ENCODE measurements at regions of chr12 and their contacts with region 1.

Region 1: GRCh38 chr12:121668750-121669520 is 519 bp downstream of the MORN3 start:
- DNase-seq: peak; percentile 24 to 70 (median 32)
- H3K4me3 ChIP-seq: no peak overlapping the region
- H3K4me3 Mint-ChIP-seq: peak overlapping the region in 4 of 7 donors; percentile 28 to 77 (median 52)
- H3K27ac ChIP-seq: no peak overlapping the region
- H3K27ac Mint-ChIP-seq: peak overlapping the region; percentile 68 to 100 (median 84)
- H3K4me1 ChIP-seq: peaks cover 69% of the 10 kb centered on the region
- H3K4me1 Mint-ChIP-seq: peaks cover 51 to 72% (median 59%) of the 10 kb centered on the region in 3 donors
- H3K27me3 ChIP-seq: no peaks in the 10 kb centered on the region
- H3K27me3 Mint-ChIP-seq: peaks cover 0 to 13% of the 10 kb centered on the region in 2 donors

Region 2: GRCh38 chr12:121494093-121494787 is 174.7 kb before region 1 on chr12:
- CTCF ChIA-PET with region 1: interaction called, 13 read pairs
- POLR2A ChIA-PET with region 1: no interaction called
- DNase-seq: peak; percentile 26 to 74 (median 47)
- H3K4me3 ChIP-seq: no peak overlapping the region
- H3K4me3 Mint-ChIP-seq: no peak overlapping the region
- H3K27ac ChIP-seq: no peak overlapping the region
- H3K27ac Mint-ChIP-seq: peak overlapping the region in 4 of 8 donors; percentile 29 to 68 (median 56)
- H3K4me1 ChIP-seq: peaks cover 10% of the 10 kb centered on the region
- H3K4me1 Mint-ChIP-seq: peaks cover 26 to 55% (median 41%) of the 10 kb centered on the region in 3 donors
- H3K27me3 ChIP-seq: no peaks in the 10 kb centered on the region
- H3K27me3 Mint-ChIP-seq: no peaks in the 10 kb centered on the region

Region 3: GRCh38 chr12:121550974-121551634 is 117.8 kb before region 1 on chr12:
- CTCF ChIA-PET with region 1: interaction called, 81 read pairs
- POLR2A ChIA-PET with region 1: interaction called, 11 read pairs
- DNase-seq: no peak
- H3K4me3 ChIP-seq: no peak overlapping the region
- H3K4me3 Mint-ChIP-seq: no peak overlapping the region
- H3K27ac ChIP-seq: no peak overlapping the region
- H3K27ac Mint-ChIP-seq: peak overlapping the region; percentile 10 to 98 (median 96)
- H3K4me1 ChIP-seq: peaks cover 13% of the 10 kb centered on the region
- H3K4me1 Mint-ChIP-seq: peaks cover 9 to 12% (median 12%) of the 10 kb centered on the region in 3 donors
- H3K27me3 ChIP-seq: no peaks in the 10 kb centered on the region
- H3K27me3 Mint-ChIP-seq: no peaks in the 10 kb centered on the region

Region 4: GRCh38 chr12:121614872-121615467 is 54.0 kb before region 1 on chr12:
- CTCF ChIA-PET with region 1: interaction called, 4 read pairs
- POLR2A ChIA-PET with region 1: interaction called, 10 read pairs
- DNase-seq: peak in 2 of 5 donors; percentile 8 to 31
- H3K4me3 ChIP-seq: no peak overlapping the region
- H3K4me3 Mint-ChIP-seq: peak overlapping the region in 4 of 7 donors; percentile 28 to 66 (median 36)
- H3K27ac ChIP-seq: no peak overlapping the region
- H3K27ac Mint-ChIP-seq: peak overlapping the region in 7 of 8 donors; percentile 22 to 91 (median 80)
- H3K4me1 ChIP-seq: no peaks in the 10 kb centered on the region
- H3K4me1 Mint-ChIP-seq: peaks cover 8 to 10% (median 9%) of the 10 kb centered on the region in 3 donors
- H3K27me3 ChIP-seq: no peaks in the 10 kb centered on the region
- H3K27me3 Mint-ChIP-seq: no peaks in the 10 kb centered on the region

Region 5: DNA sequence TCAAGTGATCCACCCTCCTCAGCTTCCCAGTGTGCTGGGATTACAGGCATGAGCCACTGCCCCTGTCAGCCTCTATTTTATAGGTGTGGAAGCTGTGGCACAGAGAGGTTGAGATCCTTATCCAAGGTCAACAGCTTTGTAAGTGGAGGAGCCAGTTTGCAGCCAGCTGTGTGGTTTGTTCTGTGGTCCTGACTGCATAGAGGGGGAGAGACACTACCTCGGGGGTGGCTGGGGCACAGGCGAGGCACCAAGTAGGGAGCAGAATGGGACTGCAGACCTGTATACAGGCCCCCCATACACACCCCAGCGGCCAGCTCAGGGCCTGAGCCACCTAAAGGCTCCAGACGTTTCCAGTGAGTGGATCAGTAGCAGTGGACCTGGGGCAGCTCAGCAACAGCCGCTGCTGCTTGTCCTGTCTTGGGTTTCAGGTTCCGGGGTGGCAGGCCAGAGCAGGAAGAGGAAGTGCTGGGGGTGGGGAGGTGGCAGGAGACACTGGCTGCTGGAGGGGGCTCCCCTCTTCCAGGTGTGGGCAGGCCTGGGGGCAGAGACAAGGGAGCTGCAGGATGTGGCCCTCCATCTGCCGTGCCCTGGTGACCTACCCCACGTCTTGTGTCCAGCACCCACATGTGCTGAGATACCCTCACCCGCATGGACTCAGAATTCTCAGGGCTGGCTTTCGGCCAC is 31.6 kb before region 1 on chr12:
- CTCF ChIA-PET with region 1: interaction called, 34 read pairs
- POLR2A ChIA-PET with region 1: interaction called, 6 read pairs
- DNase-seq: peak; percentile 37 to 72 (median 61)
- H3K4me3 ChIP-seq: peak overlapping the region; percentile 53
- H3K4me3 Mint-ChIP-seq: peak overlapping the region; percentile 39 to 88 (median 74)
- H3K27ac ChIP-seq: peak overlapping the region; percentile 69
- H3K27ac Mint-ChIP-seq: peak overlapping the region; percentile 85 to 96 (median 92)
- H3K4me1 ChIP-seq: peaks cover 54% of the 10 kb centered on the region
- H3K4me1 Mint-ChIP-seq: peaks cover 41 to 65% (median 46%) of the 10 kb centered on the region in 3 donors
- H3K27me3 ChIP-seq: no peaks in the 10 kb centered on the region
- H3K27me3 Mint-ChIP-seq: no peaks in the 10 kb centered on the region

Region 6: GRCh38 chr12:121657305-121658008 is 11.5 kb before region 1 on chr12:
- CTCF ChIA-PET with region 1: interaction called, 54 read pairs
- POLR2A ChIA-PET with region 1: interaction called, 20 read pairs
- DNase-seq: no peak
- H3K4me3 ChIP-seq: no peak overlapping the region
- H3K4me3 Mint-ChIP-seq: peak overlapping the region; percentile 14 to 77 (median 66)
- H3K27ac ChIP-seq: no peak overlapping the region
- H3K27ac Mint-ChIP-seq: peak overlapping the region; percentile 57 to 100 (median 96)
- H3K4me1 ChIP-seq: peaks cover 54% of the 10 kb centered on the region
- H3K4me1 Mint-ChIP-seq: peaks cover 53 to 79% (median 73%) of the 10 kb centered on the region in 3 donors
- H3K27me3 ChIP-seq: no peaks in the 10 kb centered on the region
- H3K27me3 Mint-ChIP-seq: peaks cover 0 to 9% of the 10 kb centered on the region in 2 donors

Region 7: DNA sequence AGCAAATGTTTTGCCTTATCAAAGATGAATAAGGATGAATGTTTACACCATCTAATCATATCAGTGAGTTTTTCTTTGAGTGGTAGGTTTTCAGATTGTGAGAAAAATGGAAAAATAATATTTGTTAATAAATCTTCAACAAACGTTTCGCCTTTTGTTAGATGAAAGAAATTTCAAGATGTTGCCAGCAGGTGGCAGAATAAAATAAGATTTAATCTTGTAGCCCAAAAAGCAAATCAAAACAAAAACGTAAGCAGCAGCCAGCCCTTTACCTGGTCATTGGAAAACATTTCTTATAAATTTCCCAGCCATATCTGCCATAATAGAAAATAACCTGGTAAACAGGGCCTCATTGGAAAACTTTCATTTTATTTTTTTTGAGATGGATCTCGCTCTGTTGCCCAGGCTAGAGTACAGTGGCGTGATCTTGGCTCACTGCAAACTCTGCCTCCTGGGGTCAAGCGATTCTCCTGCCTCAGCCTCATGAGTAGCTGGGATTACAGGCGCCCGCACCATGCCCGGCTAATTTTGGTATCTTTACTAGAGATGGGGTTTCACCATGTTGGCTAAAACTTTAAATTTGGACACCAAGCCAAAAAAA is 28.3 kb after region 1 on chr12:
- CTCF ChIA-PET with region 1: no interaction called
- POLR2A ChIA-PET with region 1: no interaction called
- DNase-seq: peak in 2 of 5 donors; percentile 54 to 61
- H3K4me3 ChIP-seq: no peak overlapping the region
- H3K4me3 Mint-ChIP-seq: peak overlapping the region in 1 of 7 donors; percentile 32
- H3K27ac ChIP-seq: no peak overlapping the region
- H3K27ac Mint-ChIP-seq: no peak overlapping the region
- H3K4me1 ChIP-seq: peaks cover 4% of the 10 kb centered on the region
- H3K4me1 Mint-ChIP-seq: peaks cover 2 to 6% (median 5%) of the 10 kb centered on the region in 3 donors
- H3K27me3 ChIP-seq: no peaks in the 10 kb centered on the region
- H3K27me3 Mint-ChIP-seq: no peaks in the 10 kb centered on the region

Region 8: DNA sequence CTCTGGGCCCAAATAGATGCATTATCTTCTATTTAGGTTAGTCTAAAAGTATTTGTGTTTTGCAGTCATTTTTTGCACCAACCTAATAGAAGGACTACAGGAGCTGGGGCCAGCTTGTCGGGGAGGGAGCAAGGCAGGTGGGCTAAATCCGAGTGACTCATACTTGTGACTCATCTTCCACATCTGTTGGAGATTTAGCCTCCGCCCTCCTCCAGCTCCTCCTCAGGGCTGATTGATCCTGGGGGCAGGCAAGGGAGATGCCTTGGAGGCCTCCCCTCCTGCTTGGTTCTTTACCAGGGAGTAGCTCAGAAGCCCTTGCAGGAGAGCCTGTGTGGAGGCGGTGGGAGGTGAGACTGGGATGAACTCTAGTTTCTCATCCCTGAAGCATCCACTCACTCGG is 96.6 kb after region 1 on chr12:
- CTCF ChIA-PET with region 1: no interaction called
- POLR2A ChIA-PET with region 1: no interaction called
- DNase-seq: no peak
- H3K4me3 ChIP-seq: no peak overlapping the region
- H3K4me3 Mint-ChIP-seq: no peak overlapping the region
- H3K27ac ChIP-seq: no peak overlapping the region
- H3K27ac Mint-ChIP-seq: no peak overlapping the region
- H3K4me1 ChIP-seq: no peaks in the 10 kb centered on the region
- H3K4me1 Mint-ChIP-seq: no peaks in the 10 kb centered on the region
- H3K27me3 ChIP-seq: no peaks in the 10 kb centered on the region
- H3K27me3 Mint-ChIP-seq: no peaks in the 10 kb centered on the region

Region 9: DNA sequence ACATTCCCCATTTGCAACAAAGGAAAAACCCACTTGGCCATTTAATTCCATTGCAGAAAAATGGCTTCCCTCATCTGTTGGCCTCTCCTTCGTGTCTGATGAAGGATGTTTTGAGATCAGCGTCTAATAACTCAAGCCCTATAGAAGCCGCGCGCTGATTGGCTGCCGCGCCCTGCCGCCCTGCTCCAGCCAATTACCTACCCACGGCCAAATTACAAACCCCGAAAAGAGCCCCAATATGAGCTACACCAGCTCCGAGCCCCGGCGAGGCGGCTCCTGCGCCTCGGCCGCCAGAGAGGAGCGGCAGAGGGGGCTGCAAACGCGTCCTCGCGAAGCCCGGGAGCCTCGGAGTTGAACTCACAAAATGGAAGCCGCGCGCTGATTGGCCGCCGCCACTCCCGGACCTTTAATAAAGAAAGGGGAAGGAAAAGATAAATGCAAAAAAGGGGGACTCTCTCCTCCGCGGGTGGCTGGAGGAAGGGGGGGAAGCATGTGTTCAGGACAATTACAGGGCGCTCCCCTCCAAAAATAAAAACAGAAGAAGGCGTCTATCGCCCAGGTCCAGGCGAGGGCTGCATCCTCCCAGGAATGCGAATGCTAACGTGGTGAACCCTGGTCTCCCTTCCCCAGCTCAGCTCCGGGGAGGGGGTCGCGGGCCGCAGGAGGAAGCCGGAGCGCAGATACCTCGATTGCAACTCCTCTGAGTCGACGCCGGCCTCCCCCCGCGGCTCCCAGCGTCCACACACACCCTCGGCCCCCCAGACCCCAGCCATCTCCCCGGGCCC is 134.1 kb after region 1 on chr12:
- CTCF ChIA-PET with region 1: no interaction called
- POLR2A ChIA-PET with region 1: interaction called, 26 read pairs
- DNase-seq: peak; percentile 83 to 96 (median 91)
- H3K4me3 ChIP-seq: peak overlapping the region; percentile 83
- H3K4me3 Mint-ChIP-seq: peak overlapping the region; percentile 91 to 99 (median 95)
- H3K27ac ChIP-seq: peak overlapping the region; percentile 94
- H3K27ac Mint-ChIP-seq: peak overlapping the region; percentile 95 to 99 (median 97)
- H3K4me1 ChIP-seq: peaks cover 28% of the 10 kb centered on the region
- H3K4me1 Mint-ChIP-seq: peaks cover 31 to 42% (median 38%) of the 10 kb centered on the region in 3 donors
- H3K27me3 ChIP-seq: no peaks in the 10 kb centered on the region
- H3K27me3 Mint-ChIP-seq: peaks cover 0 to 1% of the 10 kb centered on the region in 2 donors